Esophagus muscularis mucosa (tissue), 4 donors: ENCODE measurements at regions of chr10 and their contacts with region 1.

Region 1: DNA sequence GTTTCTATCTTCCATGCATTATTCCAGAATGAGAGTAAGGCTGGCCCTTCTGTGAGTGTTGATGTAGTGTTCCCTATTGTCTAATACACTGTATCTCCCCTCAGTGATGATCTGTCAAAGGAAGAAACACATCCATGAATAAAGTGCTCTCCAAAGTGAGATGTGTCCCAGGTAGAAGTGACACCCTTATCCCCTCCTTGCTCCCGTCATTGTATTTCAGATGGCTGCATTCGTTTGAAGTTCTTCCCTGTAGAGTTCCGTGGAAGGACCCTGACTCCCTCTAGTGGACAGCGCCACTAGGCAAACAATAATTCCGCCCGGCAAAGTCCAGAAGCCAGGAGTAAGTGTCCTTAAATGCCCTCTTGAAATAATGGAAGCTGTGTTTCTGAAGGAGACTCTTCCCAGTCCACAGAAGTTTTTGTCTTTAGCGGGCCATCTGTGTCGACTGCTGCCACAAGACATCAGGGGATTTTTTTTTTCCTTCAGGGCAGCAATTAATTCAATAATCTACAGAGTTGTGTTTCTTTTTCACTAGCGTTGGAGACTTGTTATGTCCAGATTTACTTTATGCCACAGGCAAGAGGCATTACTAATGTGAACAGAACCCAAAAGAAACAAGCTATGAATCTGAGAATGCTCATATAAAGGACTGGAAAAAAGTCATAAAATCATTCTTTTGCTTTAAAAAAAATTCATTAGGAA is 64.6 kb downstream of the THNSL1 start:
- DNase-seq: peak; percentile 93
- H3K4me3 ChIP-seq: no peak overlapping the region
- H3K27ac ChIP-seq: no peak overlapping the region
- H3K4me1 ChIP-seq: peaks cover 0 to 14% (median 11%) of the 10 kb centered on the region in 4 donors
- H3K27me3 ChIP-seq: no peaks in the 10 kb centered on the region
- CTCF ChIP-seq: peak; percentile 82 to 92 (median 85)
- EP300 ChIP-seq: no peak
- POLR2A ChIP-seq: no peak

Region 2: DNA sequence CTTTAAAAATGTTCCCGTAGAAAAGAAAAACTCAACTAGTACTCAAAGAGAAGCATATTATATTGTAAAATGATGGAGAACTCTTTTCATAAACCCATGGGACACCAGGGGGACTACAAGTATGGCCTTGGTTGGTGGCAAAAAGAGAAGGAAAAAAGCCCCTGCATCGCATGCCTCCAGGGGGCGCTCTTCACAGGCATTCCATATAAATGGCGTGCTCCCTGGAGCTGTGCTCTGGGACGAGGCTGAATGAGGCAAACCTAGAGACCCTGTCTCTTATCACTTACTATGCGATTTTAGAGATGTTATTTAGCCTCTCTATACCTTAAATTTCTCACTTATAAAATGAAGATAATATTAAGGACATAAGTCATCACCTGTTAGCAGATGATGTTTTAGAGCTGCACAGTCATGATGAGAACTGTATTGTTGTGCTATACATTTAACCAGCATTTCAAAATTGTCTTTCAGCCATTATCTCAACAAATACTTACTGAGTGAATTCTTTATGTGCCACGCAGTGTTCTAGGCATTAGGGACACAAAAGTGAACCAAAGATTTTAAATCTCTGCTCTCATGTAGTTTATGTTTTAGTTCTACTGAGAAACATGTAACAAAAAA is 463.1 kb before region 1 on chr10:
- intact Hi-C with region 1: loop called (anchors 5 kb)
- DNase-seq: no peak
- H3K4me3 ChIP-seq: no peak overlapping the region
- H3K27ac ChIP-seq: no peak overlapping the region
- H3K4me1 ChIP-seq: peaks cover 0 to 3% (median 0%) of the 10 kb centered on the region in 4 donors
- H3K27me3 ChIP-seq: no peaks in the 10 kb centered on the region
- CTCF ChIP-seq: peak; percentile 63 to 86 (median 77)
- EP300 ChIP-seq: no peak
- POLR2A ChIP-seq: no peak

Region 3: DNA sequence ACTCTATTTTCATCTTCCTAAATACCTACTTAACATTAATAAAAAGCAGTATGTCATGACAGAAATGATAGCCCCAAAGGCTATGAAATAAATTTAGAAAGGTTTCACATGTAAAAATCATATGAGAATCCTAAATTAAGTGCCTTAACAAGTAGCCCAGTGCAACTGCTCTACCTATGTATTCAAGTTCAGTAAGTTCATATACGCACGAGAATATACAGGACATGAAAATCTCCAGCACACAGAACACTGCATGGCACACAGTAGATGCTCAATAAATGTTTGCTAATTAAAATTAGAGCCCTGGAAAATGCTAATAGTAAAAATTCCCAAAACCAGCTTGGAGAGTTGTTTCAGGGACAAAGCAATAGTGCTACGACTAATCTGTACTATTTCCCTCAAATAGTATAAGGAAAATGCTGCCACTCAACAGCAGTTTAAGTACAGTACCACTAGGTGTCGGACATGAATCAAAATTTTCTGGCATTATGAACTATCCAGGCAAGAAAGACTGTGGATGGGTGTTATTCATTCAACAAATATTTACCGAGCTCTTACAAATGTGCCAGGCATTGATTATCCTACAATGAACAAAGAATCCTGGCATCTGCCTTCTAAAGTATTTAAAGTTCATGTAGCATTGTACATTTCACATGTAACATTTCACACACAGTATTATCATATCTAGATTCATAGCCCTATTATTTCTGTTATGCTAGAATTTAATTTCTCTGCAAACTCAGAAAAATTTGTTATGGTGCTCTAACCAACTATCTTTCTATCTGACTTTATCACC is 438.2 kb before region 1 on chr10:
- intact Hi-C with region 1: loop called (anchors 2 kb)
- DNase-seq: no peak
- H3K4me3 ChIP-seq: no peak overlapping the region
- H3K27ac ChIP-seq: no peak overlapping the region
- H3K4me1 ChIP-seq: peaks cover 3 to 14% (median 10%) of the 10 kb centered on the region in 4 donors
- H3K27me3 ChIP-seq: no peaks in the 10 kb centered on the region
- CTCF ChIP-seq: peak; percentile 67 to 85 (median 76)
- EP300 ChIP-seq: no peak
- POLR2A ChIP-seq: no peak